Ovary (tissue), 10 donors: ENCODE measurements at regions of chrX and their contacts with region 1.

Region 1: GRCh38 chrX:39149761-39150160 is 348.5 kb downstream of the MID1IP1 start:
- DNase-seq: peak; percentile 40 to 81 (median 76)
- H3K4me3 ChIP-seq: no peak overlapping the region
- H3K27ac ChIP-seq: no peak overlapping the region
- H3K4me1 ChIP-seq: no peaks in the 10 kb centered on the region
- H3K27me3 ChIP-seq: no peaks in the 10 kb centered on the region
- CTCF ChIP-seq: peak in 2 of 3 donors; percentile 28 to 32
- EP300 ChIP-seq: no peak
- POLR2A ChIP-seq: no peak

Region 2: DNA sequence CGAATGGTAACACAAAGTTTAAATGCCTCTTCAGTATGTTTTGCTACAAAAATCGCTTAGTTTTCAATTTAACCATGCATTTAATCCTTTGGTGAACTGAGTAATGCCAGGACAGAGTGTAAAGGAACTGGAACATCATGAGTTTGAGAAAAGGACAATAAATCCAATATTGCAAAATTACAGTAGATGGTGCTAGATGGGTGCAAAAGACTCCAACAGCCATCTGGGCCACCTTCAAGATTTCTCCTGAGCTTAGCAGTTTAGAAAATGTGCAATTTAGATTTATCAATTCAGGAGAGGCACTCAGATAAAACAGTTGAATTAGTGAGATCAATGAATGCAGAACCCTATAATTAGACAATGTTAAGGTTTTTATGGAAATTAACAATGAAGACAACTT is 381.7 kb before region 1 on chrX:
- intact Hi-C with region 1: loop called in 1 of 4 experiments (anchors 10 kb)
- DNase-seq: no peak
- H3K4me3 ChIP-seq: no peak overlapping the region
- H3K27ac ChIP-seq: no peak overlapping the region
- H3K4me1 ChIP-seq: no peaks in the 10 kb centered on the region
- H3K27me3 ChIP-seq: no peaks in the 10 kb centered on the region
- CTCF ChIP-seq: peak in 2 of 3 donors; percentile 36 to 37
- EP300 ChIP-seq: no peak
- POLR2A ChIP-seq: no peak

Region 3: DNA sequence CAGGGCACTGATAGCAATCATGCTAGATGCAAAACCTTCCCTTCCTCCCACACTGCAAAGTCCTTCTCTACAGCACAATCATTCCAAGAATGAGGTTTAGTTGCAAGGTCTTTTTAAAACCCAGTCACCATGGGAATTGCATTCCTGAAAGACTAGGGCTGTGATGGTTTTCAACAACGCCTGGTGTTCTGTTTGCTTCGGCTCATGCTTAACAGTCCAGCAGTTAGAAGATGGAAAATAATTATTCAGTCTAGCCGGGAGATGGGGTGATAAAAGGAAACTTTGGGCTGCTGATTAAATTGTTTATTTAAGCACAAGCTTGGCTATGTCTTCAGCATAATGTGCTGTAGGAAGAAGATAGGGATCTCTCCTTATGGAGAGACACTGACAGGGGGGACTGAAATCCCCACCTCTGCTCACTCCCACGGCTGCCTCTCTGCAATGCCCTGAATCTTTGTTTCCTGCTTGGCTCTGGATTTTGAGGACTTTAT is 137.1 kb before region 1 on chrX:
- intact Hi-C with region 1: no loop called
- DNase-seq: no peak
- H3K4me3 ChIP-seq: no peak overlapping the region
- H3K27ac ChIP-seq: no peak overlapping the region
- H3K4me1 ChIP-seq: no peaks in the 10 kb centered on the region
- H3K27me3 ChIP-seq: no peaks in the 10 kb centered on the region
- CTCF ChIP-seq: no peak
- EP300 ChIP-seq: no peak
- POLR2A ChIP-seq: no peak